ENCODE measurements at regions of chr19 and their contacts with region 1.

Region 1: GRCh38 chr19:2578901-2579677 is 103.2 kb downstream of the GADD45B start:
- DNase-seq: peak; percentile 89
- ATAC-seq: peak; percentile 87 to 89

Region 2: GRCh38 chr19:2494444-2495129 is 84.5 kb before region 1 on chr19:
- intact Hi-C with region 1: no loop called
- DNase-seq: peak; percentile 91
- ATAC-seq: peak; percentile 84 to 86

Region 3: DNA sequence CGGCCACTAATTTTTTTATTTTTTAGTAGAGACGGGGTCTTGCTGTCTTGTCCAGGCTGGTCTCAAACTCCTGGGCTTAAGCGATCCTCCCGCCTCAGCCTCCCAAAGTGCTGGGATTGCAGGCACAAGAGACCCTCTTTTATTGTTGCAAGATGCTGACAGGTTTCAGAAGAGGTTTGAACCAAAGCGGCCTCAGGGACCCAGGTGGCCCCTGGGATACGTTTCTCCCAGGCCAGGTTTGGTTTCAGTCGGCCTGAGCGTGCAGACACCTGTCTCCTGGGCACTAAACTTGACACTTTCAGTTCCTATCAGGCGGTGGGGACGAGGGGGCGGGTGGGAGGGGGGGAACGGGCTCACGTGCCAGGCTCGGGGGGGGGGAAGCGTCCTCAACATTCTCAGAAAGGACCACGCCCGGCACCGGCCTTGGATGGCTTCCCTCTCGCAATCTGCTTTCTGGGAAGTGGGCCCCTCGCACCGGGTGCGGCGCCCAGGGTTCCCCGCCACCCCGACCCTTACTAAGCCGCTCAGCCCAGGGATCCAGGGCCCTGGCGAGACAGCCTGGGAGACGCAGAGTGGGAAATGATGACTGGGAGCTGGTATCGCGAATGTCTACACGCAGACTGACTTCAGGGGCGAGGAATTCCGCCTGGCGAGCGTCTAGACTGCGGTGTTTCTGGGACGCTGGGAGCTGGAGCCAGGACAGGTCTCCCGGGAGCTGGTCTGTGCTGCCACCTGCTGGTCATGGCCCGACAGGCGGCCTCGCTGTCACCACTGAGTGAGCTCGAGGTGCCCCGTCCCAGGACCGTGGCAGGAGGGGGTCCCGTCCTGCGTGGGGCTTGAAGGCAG is 31.8 kb after region 1 on chr19:
- intact Hi-C with region 1: loop called in 1 of 2 experiments (anchors 1 kb)
- DNase-seq: peak; percentile 96
- ATAC-seq: peak; percentile 93 to 94

Region 4: GRCh38 chr19:2627319-2627829 is 48.3 kb after region 1 on chr19:
- intact Hi-C with region 1: no loop called
- DNase-seq: peak; percentile 85
- ATAC-seq: peak; percentile 67 to 89